HepG2 (cell line): ENCODE measurements at regions of chr11 and their contacts with region 1.

Region 1: GRCh38 chr11:36265793-36266628 is 23.2 kb downstream of the COMMD9 start:
- DNase-seq: peak; percentile 16
- ATAC-seq: peak; percentile 89
- H3K4me3 ChIP-seq: no peak overlapping the region
- H3K27ac ChIP-seq: no peak overlapping the region
- H3K4me1 ChIP-seq: no peaks in the 10 kb centered on the region
- H3K27me3 ChIP-seq: peaks cover 0 to 10% of the 10 kb centered on the region in 2 experiments; a peak in 2 of 5 replicates
- CTCF ChIP-seq: peak; percentile 88
- EP300 ChIP-seq: no peak
- POLR2A ChIP-seq: no peak
- RAD21 ChIP-seq: peak; percentile 64

Region 2: GRCh38 chr11:35485656-35486322 is 780.2 kb before region 1 on chr11:
- CTCF ChIA-PET with region 1: interaction called, 3 read pairs
- POLR2A ChIA-PET with region 1: no interaction called
- in situ Hi-C with region 1: loop called (anchors 25 kb)
- intact Hi-C with region 1: loop called (anchors 5 kb)
- DNase-seq: peak; percentile 34
- ATAC-seq: peak; percentile 98
- H3K4me3 ChIP-seq: no peak overlapping the region
- H3K27ac ChIP-seq: no peak overlapping the region
- H3K4me1 ChIP-seq: no peaks in the 10 kb centered on the region
- H3K27me3 ChIP-seq: peaks cover 0 to 10% of the 10 kb centered on the region in 2 experiments; a peak in 1 of 5 replicates
- CTCF ChIP-seq: peak; percentile 80
- EP300 ChIP-seq: no peak
- POLR2A ChIP-seq: no peak
- RAD21 ChIP-seq: no peak

Region 3: GRCh38 chr11:36478700-36479329 is 212.8 kb after region 1 on chr11:
- CTCF ChIA-PET with region 1: no interaction called
- POLR2A ChIA-PET with region 1: no interaction called
- in situ Hi-C with region 1: no loop called
- intact Hi-C with region 1: loop called (anchors 5 kb)
- DNase-seq: peak; percentile 39
- ATAC-seq: peak; percentile 76
- H3K4me3 ChIP-seq: no peak overlapping the region
- H3K27ac ChIP-seq: no peak overlapping the region
- H3K4me1 ChIP-seq: no peaks in the 10 kb centered on the region
- H3K27me3 ChIP-seq: no peaks in the 10 kb centered on the region
- CTCF ChIP-seq: peak; percentile 61
- EP300 ChIP-seq: no peak
- POLR2A ChIP-seq: no peak
- RAD21 ChIP-seq: no peak